PC-9 (cell line): ENCODE measurements at regions of chr2 and their contacts with region 1.

Region 1: DNA sequence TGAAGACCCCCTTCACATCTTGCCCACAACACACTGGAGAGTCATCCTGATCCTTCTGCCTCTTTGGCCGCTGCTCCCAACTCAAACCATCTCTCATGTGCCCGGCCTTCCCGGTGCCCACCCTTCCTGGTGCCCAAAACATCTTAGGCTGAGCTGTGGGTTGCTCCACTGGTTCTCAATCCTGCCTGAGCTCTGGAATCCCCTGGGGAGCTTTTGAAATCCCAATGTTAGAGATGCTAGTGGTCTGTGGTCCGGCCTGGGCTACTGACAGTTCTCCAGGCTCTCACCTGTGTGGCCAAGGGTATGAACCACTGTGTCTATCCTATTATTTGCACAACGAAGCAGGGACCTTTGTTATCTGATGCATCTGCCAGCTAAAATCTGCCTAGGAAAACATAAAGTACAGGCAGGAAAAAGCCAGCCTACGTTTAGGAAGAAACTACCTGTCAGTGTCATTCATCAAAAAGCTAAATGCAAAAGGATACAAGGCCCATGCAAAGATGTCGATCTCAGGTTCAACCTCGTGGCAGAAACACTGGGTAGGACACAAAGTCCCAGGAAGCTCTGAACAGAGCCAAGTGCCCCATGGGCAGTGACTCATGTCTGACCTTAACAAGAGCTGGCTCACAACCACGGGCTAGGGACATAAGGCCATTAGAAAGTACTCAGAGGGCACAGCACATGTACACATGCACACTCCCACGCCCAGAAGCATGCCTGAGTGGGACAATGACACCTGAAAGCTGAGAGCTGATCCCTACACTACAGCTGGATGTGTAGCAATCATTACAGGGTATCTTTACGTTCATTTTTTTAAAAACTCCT is 30.8 kb downstream of the TBC1D8 start:
- DNase-seq: peak; percentile 79 to 98
- H3K4me3 ChIP-seq: no peak overlapping the region
- H3K27ac ChIP-seq: peak overlapping the region; percentile 84
- H3K4me1 ChIP-seq: peaks cover 90% of the 10 kb centered on the region
- H3K27me3 ChIP-seq: no peaks in the 10 kb centered on the region
- CTCF ChIP-seq: no peak

Region 2: GRCh38 chr2:100941646-100942240 is 178.6 kb before region 1 on chr2:
- CTCF ChIA-PET with region 1: no interaction called
- POLR2A ChIA-PET with region 1: no interaction called
- intact Hi-C with region 1: no loop called
- DNase-seq: no peak
- H3K4me3 ChIP-seq: no peak overlapping the region
- H3K27ac ChIP-seq: no peak overlapping the region
- H3K4me1 ChIP-seq: no peaks in the 10 kb centered on the region
- H3K27me3 ChIP-seq: no peaks in the 10 kb centered on the region
- CTCF ChIP-seq: no peak

Region 3: DNA sequence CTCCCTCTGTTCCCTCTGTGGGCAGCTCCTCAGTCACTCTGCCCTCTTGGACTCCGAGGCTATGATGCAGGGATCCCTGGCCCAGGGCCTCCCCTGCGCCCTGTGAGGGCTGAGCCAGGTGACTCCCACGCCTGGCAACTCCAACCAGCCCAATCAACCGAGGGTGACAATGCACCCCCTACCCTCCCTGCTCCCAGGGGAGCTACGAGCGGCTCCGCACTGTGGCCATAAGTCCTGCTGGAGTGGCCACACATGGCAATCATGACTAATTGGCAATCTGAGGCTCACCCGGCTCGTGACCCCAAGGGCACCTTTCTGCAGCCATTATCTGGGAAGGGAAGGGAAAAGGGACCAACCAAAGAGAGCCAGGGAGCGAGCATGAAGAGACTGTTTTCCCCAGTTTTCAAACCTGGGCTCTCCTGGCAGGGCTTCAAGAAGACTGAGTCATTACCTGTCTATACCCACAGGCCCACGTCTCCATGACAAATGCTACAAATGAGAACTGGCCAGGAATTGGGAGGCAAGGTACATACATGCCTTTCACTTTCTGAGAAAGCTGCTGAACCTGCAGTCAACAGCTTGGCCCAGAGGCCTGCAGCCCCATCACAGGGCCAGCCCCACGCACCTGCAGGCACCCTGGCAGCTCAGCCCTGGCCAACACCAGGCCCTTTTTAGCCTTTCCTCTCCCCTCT is 73.2 kb before region 1 on chr2:
- CTCF ChIA-PET with region 1: interaction called, 3 read pairs
- POLR2A ChIA-PET with region 1: no interaction called
- intact Hi-C with region 1: loop called (anchors 2 kb)
- DNase-seq: peak; percentile 70 to 77
- H3K4me3 ChIP-seq: no peak overlapping the region
- H3K27ac ChIP-seq: no peak overlapping the region
- H3K4me1 ChIP-seq: peaks cover 10% of the 10 kb centered on the region
- H3K27me3 ChIP-seq: no peaks in the 10 kb centered on the region
- CTCF ChIP-seq: no peak

Region 4: GRCh38 chr2:101064868-101065549 is 55.4 kb before region 1 on chr2:
- CTCF ChIA-PET with region 1: interaction called, 3 read pairs
- POLR2A ChIA-PET with region 1: no interaction called
- intact Hi-C with region 1: loop called (anchors 2 kb)
- DNase-seq: peak; percentile 34 to 76
- H3K4me3 ChIP-seq: no peak overlapping the region
- H3K27ac ChIP-seq: peak overlapping the region; percentile 66
- H3K4me1 ChIP-seq: peaks cover 18% of the 10 kb centered on the region
- H3K27me3 ChIP-seq: no peaks in the 10 kb centered on the region
- CTCF ChIP-seq: no peak

Region 5: DNA sequence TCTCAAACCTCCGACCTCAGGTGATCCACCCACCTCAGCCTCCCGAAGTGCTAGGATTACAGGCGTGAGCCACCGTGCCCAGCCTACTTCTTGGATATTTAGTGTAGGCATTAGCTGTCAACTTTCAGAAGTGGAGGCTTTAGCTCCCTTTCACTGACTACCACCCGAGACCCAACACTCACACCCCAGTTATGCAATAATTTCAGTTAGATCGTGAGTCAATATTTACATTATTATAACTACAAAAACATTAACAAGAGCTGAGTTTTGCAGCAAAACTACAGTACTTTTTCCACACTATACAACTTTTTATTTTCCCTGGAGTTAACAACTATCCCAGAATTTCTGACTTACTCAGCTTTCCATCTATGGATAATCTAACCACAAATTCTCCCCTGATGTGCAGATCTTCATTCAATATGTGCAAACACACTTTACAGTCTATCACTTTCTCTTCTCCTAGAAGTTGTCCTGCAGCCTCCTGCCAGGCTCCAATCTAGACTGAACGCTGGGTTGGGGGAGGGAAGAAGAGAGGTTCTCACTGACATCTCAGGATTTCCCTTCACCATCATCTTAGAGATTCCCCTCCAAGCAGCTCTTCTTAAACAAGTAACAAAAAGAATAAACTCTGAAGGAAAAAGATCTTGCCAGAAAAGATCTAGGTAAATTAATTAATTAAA is 20.7 kb after region 1 on chr2:
- CTCF ChIA-PET with region 1: no interaction called
- POLR2A ChIA-PET with region 1: interaction called, 3 read pairs
- intact Hi-C with region 1: loop called (anchors 2 kb)
- DNase-seq: no peak
- H3K4me3 ChIP-seq: no peak overlapping the region
- H3K27ac ChIP-seq: peak overlapping the region; percentile 27
- H3K4me1 ChIP-seq: peaks cover 60% of the 10 kb centered on the region
- H3K27me3 ChIP-seq: no peaks in the 10 kb centered on the region
- CTCF ChIP-seq: no peak